Activated CD4-positive, alpha-beta memory T cell treated with anti-CD3 and anti-CD28 coated beads, Interleukin-2, amount 10 ng/mL, durations not matched to agents 7 days and 5 days (primary cell): ENCODE measurements at regions of chrX and their contacts with region 1.

Region 1: DNA sequence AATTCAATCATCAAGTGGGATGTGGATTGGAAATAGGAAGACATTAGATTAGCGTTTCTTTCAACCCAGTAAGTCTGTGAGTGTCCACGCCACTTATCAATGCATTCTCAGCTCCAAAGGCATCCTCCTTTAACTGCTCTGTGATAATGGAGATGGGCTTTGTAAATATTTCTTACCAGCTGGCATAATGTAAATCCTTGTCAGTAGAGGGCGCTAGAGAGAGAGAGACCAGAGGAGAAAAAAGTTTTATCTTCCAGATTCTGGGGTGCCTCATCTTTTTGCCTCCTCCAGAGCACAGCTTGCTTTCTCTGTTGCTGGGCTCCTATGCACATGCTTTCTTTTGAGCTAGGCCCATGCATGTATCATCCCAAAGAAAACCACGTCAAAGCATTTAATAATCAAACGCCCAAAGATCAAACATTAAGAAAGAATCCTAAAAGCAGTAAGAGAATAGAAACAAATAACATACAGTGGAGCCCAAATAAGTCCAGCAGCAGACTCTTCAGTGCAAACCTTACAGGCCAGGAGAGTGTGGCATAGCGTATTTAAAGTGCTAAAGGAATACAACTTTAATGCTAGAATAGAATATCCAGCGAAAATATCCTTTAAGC is 9.6 kb upstream of the MTMR1 start:
- DNase-seq: peak; percentile 17
- H3K4me3 Mint-ChIP-seq: no peak overlapping the region
- H3K27ac Mint-ChIP-seq: no peak overlapping the region
- H3K4me1 Mint-ChIP-seq: peaks cover 4% of the 10 kb centered on the region
- H3K27me3 Mint-ChIP-seq: no peaks in the 10 kb centered on the region

Region 2: GRCh38 chrX:150693775-150694574 is 10.3 kb after region 1 on chrX:
- CTCF ChIA-PET with region 1: interaction called, 12 read pairs
- POLR2A ChIA-PET with region 1: interaction called, 12 read pairs
- DNase-seq: peak; percentile 83
- H3K4me3 Mint-ChIP-seq: peak overlapping the region; percentile 88
- H3K27ac Mint-ChIP-seq: peak overlapping the region; percentile 100
- H3K4me1 Mint-ChIP-seq: peaks cover 67% of the 10 kb centered on the region
- H3K27me3 Mint-ChIP-seq: no peaks in the 10 kb centered on the region

Region 3: GRCh38 chrX:150704030-150704613 is 20.5 kb after region 1 on chrX:
- CTCF ChIA-PET with region 1: interaction called, 12 read pairs
- POLR2A ChIA-PET with region 1: no interaction called
- DNase-seq: no peak
- H3K4me3 Mint-ChIP-seq: no peak overlapping the region
- H3K27ac Mint-ChIP-seq: no peak overlapping the region
- H3K4me1 Mint-ChIP-seq: peaks cover 26% of the 10 kb centered on the region
- H3K27me3 Mint-ChIP-seq: no peaks in the 10 kb centered on the region

Region 4: DNA sequence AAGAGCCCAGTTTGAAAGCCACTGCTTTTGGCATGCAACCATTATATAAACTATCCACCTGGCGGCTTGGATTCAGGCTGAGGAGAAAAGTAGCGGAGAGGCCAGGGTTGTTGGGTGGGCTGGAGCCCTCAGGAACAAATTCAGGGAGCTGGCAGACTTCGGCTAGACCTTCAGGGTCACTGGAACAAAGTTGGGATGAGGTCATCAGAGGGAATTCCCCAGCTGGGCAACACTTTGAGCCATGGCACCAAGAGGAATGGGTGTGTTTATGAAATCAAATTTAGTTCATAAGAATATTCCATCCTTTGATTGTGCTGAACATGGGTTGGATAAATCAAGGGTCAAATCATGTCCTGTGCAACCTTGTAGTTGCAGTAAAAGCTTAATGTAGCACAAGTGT is 31.5 kb after region 1 on chrX:
- CTCF ChIA-PET with region 1: interaction called, 70 read pairs
- POLR2A ChIA-PET with region 1: interaction called, 3 read pairs
- DNase-seq: no peak
- H3K4me3 Mint-ChIP-seq: no peak overlapping the region
- H3K27ac Mint-ChIP-seq: no peak overlapping the region
- H3K4me1 Mint-ChIP-seq: peaks cover 13% of the 10 kb centered on the region
- H3K27me3 Mint-ChIP-seq: no peaks in the 10 kb centered on the region